ENCODE measurements at regions of chr15 and their contacts with region 1.

Region 1: DNA sequence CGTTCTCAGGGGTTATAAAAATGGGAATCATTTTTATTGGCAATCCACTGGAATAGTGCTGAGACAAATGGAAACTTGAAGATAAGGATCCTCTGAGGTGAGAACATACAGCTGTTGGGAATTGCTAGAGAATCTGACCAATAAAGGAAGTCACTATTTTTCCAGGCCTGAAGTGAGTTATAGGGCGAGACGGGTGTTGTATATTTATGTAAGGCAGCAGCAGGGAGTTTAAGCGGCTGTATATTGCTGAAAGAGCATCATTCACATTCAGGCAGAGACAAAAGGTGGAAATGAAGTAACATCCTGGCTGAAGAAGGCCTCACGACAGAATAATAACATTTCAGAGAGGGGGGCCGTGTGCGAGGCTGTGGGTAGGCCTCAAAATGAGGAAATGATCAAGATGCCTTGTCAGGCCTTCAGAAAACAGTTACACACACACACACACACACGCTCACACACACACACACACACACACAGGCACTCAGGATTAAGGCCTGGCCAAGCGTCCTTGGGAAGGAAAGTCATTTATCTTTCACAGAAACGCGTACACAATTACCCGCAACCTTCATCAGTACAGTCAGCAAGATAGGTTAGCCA is 964.9 kb upstream of the NR2F2 start:
- DNase-seq: peak; percentile 100
- H3K4me3 ChIP-seq: no peak overlapping the region
- H3K27ac ChIP-seq: peak overlapping the region; percentile 98
- H3K4me1 ChIP-seq: peaks cover 37% of the 10 kb centered on the region
- H3K27me3 ChIP-seq: no peaks in the 10 kb centered on the region
- CTCF ChIP-seq: no peak
- POLR2A ChIP-seq: peak; percentile 87

Region 2: GRCh38 chr15:94700211-94700610 is 665.4 kb before region 1 on chr15:
- CTCF ChIA-PET with region 1: no interaction called
- POLR2A ChIA-PET with region 1: no interaction called
- dilution Hi-C with region 1: no loop called
- intact Hi-C with region 1: loop called (anchors 1 kb)
- DNase-seq: no peak
- H3K4me3 ChIP-seq: no peak overlapping the region
- H3K27ac ChIP-seq: no peak overlapping the region
- H3K4me1 ChIP-seq: peaks cover 44% of the 10 kb centered on the region
- H3K27me3 ChIP-seq: no peaks in the 10 kb centered on the region
- CTCF ChIP-seq: no peak
- POLR2A ChIP-seq: no peak

Region 3: GRCh38 chr15:95326431-95327182 is 39.0 kb before region 1 on chr15:
- CTCF ChIA-PET with region 1: interaction called, 7 read pairs
- POLR2A ChIA-PET with region 1: no interaction called
- dilution Hi-C with region 1: no loop called
- intact Hi-C with region 1: loop called (anchors 1 kb)
- DNase-seq: peak; percentile 75
- H3K4me3 ChIP-seq: peak overlapping the region; percentile 64 to 81 (median 65)
- H3K27ac ChIP-seq: peak overlapping the region; percentile 98
- H3K4me1 ChIP-seq: peaks cover 63% of the 10 kb centered on the region
- H3K27me3 ChIP-seq: no peaks in the 10 kb centered on the region
- CTCF ChIP-seq: peak in 1 of 2 donors; percentile 0
- POLR2A ChIP-seq: no peak

Region 4: GRCh38 chr15:95734422-95735316 is 369.1 kb after region 1 on chr15:
- CTCF ChIA-PET with region 1: no interaction called
- POLR2A ChIA-PET with region 1: no interaction called
- dilution Hi-C with region 1: no loop called
- intact Hi-C with region 1: loop called (anchors 1 kb)
- DNase-seq: peak; percentile 96
- H3K4me3 ChIP-seq: no peak overlapping the region
- H3K27ac ChIP-seq: peak overlapping the region; percentile 70
- H3K4me1 ChIP-seq: peaks cover 28% of the 10 kb centered on the region
- H3K27me3 ChIP-seq: no peaks in the 10 kb centered on the region
- CTCF ChIP-seq: no peak
- POLR2A ChIP-seq: peak; percentile 50

Region 5: GRCh38 chr15:95975212-95975611 is 609.6 kb after region 1 on chr15:
- CTCF ChIA-PET with region 1: no interaction called
- POLR2A ChIA-PET with region 1: no interaction called
- dilution Hi-C with region 1: no loop called
- intact Hi-C with region 1: no loop called
- DNase-seq: no peak
- H3K4me3 ChIP-seq: no peak overlapping the region
- H3K27ac ChIP-seq: no peak overlapping the region
- H3K4me1 ChIP-seq: no peaks in the 10 kb centered on the region
- H3K27me3 ChIP-seq: no peaks in the 10 kb centered on the region
- CTCF ChIP-seq: no peak
- POLR2A ChIP-seq: no peak

Region 6: GRCh38 chr15:96273317-96274086 is 907.9 kb after region 1 on chr15:
- CTCF ChIA-PET with region 1: no interaction called
- POLR2A ChIA-PET with region 1: no interaction called
- dilution Hi-C with region 1: no loop called
- intact Hi-C with region 1: loop called (anchors 1 kb)
- DNase-seq: peak; percentile 94
- H3K4me3 ChIP-seq: no peak overlapping the region
- H3K27ac ChIP-seq: peak overlapping the region; percentile 90
- H3K4me1 ChIP-seq: peaks cover 41% of the 10 kb centered on the region
- H3K27me3 ChIP-seq: no peaks in the 10 kb centered on the region
- CTCF ChIP-seq: no peak
- POLR2A ChIP-seq: peak; percentile 84